ENCODE measurements at regions of chr1 and their contacts with region 1.

Region 1: GRCh38 chr1:37493336-37494098 is 19.1 kb downstream of the ZC3H12A start:
- DNase-seq: no peak
- H3K4me3 ChIP-seq: no peak overlapping the region
- CTCF ChIP-seq: no peak

Region 2: GRCh38 chr1:37442139-37442538 is 51.4 kb before region 1 on chr1:
- in situ Hi-C with region 1: loop called (anchors 5 kb)
- DNase-seq: no peak
- H3K4me3 ChIP-seq: no peak overlapping the region
- CTCF ChIP-seq: no peak

Region 3: GRCh38 chr1:37595440-37596319 is 102.2 kb after region 1 on chr1 and contains the start of gene GNL2:
- in situ Hi-C with region 1: no loop called
- DNase-seq: peak; percentile 89
- H3K4me3 ChIP-seq: peak within 1 kb of the TSS; percentile 96
- CTCF ChIP-seq: no peak